OCI-LY7 (cell line): ENCODE measurements at regions of chr3 and their contacts with region 1.

Region 1: DNA sequence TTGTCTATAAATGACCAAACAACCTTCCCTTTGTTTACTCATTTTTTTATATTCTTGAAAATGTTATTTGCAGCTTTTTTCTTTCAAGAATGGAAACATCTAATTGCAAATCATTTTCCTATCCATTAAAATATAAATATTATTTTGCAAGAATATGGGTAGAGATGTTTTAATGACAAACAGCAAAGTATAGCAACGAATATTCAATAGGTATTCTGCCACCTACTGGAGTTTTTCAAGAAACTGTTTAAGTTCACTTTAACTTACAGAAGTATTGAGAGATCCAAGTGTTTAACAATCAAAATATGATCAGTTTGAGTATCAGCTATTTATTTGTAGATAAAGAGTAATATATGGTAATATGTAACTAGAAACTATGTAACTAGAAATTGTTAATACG is 6.9 kb upstream of the EOGT start:
- DNase-seq: peak; percentile 8
- H3K4me3 ChIP-seq: no peak overlapping the region
- H3K27ac ChIP-seq: no peak overlapping the region
- H3K4me1 ChIP-seq: no peaks in the 10 kb centered on the region
- CTCF ChIP-seq: peak; percentile 82

Region 2: DNA sequence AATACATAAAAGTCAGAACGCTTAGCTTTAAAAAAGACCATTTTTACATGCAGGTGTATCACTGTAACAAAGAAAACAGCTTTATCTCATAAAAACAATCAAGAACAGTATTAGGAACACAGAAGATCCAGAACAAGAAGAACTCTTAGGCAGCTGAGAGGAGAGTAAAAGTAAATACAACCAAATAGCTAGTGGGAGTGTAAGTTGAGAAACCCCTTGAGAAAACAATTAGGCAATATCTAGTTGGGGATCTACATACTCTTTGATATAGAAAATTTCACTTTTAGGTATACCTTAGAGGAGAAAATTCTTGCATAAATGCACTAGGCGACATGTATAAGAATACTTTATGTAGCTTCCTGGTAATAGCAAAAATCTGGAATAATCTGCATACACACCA is 24.2 kb after region 1 on chr3:
- CTCF ChIA-PET with region 1: interaction called, 3 read pairs
- POLR2A ChIA-PET with region 1: interaction called, 3 read pairs
- intact Hi-C with region 1: loop called (anchors 2 kb)
- DNase-seq: no peak
- H3K4me3 ChIP-seq: no peak overlapping the region
- H3K27ac ChIP-seq: no peak overlapping the region
- H3K4me1 ChIP-seq: no peaks in the 10 kb centered on the region
- CTCF ChIP-seq: no peak

Region 3: GRCh38 chr3:69129531-69129930 is 109.1 kb after region 1 on chr3:
- CTCF ChIA-PET with region 1: no interaction called
- POLR2A ChIA-PET with region 1: no interaction called
- intact Hi-C with region 1: no loop called
- DNase-seq: no peak
- H3K4me3 ChIP-seq: no peak overlapping the region
- H3K27ac ChIP-seq: no peak overlapping the region
- H3K4me1 ChIP-seq: no peaks in the 10 kb centered on the region
- CTCF ChIP-seq: no peak